ENCODE measurements at regions of chr4 and their contacts with region 1.

Region 1: DNA sequence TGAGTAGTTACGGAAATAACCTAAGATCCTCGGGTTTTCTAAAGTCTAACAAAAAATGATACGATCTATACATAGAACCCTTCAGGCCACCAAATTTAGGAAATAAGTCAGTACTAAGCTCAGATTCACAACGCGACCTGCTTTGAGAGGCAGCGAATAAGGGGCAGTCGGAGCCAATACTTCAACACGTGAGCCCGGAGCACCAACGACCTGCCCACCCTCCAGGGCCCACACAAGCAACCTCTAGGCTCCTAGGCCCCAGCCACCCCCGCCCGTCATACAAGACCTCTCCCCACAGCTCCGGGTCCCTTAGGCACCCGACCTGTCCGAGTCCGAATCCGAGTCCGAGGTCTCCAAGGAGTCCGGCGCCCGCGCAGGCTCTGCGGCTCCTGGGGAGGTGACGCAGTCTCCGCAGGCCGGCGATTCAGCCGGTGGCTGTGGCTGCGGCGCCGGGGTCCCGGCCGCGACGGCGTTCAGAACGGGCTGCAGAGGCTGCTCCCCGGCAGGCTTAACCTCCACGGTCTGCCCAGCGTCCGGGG is 580 bp downstream of the NAF1 start:
- DNase-seq: peak; percentile 23 to 78 (median 43)
- ATAC-seq: peak; percentile 61
- H3K4me3 ChIP-seq: peak overlapping the region; percentile 87
- H3K4me3 Mint-ChIP-seq: peak overlapping the region; percentile 87
- H3K27ac ChIP-seq: peak overlapping the region; percentile 86 to 96
- H3K27ac Mint-ChIP-seq: peak overlapping the region; percentile 100
- H3K4me1 ChIP-seq: peaks cover 17% of the 10 kb centered on the region
- H3K4me1 Mint-ChIP-seq: peaks cover 49% of the 10 kb centered on the region
- H3K27me3 ChIP-seq: no peaks in the 10 kb centered on the region
- H3K27me3 Mint-ChIP-seq: no peaks in the 10 kb centered on the region
- CTCF ChIP-seq: no peak

Region 2: DNA sequence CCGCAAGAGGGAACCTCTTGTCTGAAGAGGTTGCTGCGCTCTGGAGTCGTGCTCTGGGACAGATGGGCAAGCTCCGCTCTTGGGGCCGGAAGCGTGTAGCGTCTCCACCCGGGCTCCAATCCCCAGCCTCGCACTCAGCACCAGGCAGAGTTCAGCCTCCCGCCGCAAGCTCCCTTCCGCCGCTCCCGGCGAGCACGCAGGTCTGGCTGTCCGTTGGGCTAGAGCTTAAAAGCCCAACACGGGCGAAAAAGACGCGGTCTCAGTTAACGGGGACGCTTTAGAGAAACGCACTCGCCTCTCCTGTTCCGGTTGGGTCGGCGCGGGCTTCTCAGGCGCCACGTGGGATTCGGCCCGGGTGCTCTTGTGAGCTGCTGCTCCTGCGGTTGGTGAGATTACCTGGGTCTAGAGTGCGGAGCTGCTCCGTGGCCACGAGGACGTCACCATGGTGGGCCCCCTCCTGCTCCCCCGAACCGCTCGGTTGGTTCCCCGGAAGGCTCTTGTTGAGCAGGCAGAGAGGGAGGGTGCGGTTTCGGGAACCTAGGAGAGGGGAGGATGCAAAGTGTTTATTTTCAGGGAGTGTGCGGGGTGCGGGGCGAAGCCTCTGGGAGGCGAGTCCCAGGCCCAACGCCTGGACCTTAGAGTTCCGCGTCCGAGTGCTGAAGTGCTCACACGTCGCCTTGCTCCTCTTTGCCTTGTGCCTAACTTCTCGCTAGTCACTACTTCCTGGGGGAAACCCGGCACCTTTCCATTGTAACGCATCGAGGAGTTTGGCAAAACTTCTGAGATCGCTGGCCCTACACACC is 328.5 kb after region 1 on chr4 and contains the start of gene TMA16:
- CTCF ChIA-PET with region 1: no interaction called
- POLR2A ChIA-PET with region 1: interaction called, 11 read pairs
- intact Hi-C with region 1: loop called (anchors 5 kb)
- DNase-seq: peak; percentile 58 to 90 (median 71)
- ATAC-seq: peak; percentile 74
- H3K4me3 ChIP-seq: peak within 1 kb of the TSS; percentile 94
- H3K4me3 Mint-ChIP-seq: peak within 1 kb of the TSS; percentile 100
- H3K27ac ChIP-seq: peak within 1 kb of the TSS; percentile 70 to 71
- H3K27ac Mint-ChIP-seq: peak within 1 kb of the TSS; percentile 96
- H3K4me1 ChIP-seq: peaks cover 7% of the 10 kb centered on the region
- H3K4me1 Mint-ChIP-seq: peaks cover 36% of the 10 kb centered on the region
- H3K27me3 ChIP-seq: no peaks in the 10 kb centered on the region
- H3K27me3 Mint-ChIP-seq: no peaks in the 10 kb centered on the region
- CTCF ChIP-seq: no peak
- total RNA-seq, gene TMA16: 6.2 to 6.3 TPM

Region 3: DNA sequence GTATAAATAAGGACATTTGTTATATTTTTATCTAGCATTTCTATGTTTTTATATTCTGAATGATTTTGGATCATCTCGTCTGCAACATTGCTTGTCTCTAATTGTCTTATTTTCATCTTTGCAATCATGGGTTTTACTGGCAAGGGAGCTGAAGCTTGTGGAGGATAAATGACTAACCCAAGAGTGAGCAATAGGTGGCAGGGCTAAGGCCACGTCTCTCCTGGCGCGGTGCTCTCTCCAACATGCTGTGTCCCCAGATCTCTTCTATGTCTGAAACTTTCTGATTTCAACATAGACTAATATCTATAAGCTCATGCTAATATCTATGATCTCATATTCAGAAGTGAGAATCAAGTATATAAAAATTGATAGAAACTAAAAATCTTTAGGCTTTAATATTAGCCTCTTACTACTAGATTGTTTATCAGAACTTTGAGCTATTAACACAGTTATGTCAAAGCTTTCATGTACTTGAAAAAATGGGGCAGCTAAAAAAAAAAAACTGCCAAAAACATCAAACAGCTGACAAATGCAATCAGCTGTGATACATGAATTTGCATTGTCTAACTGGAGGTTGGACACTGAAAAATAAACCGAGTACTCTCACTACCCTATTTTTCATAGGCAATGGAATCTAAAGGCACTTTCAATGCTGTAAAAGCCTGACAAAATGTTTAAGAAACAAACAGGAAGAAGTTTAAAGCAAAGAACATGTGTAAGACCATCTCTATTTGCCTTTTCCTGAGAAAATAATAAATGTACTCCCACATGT is 497.5 kb after region 1 on chr4:
- CTCF ChIA-PET with region 1: no interaction called
- POLR2A ChIA-PET with region 1: no interaction called
- intact Hi-C with region 1: loop called in 1 of 2 experiments (anchors 10 kb)
- DNase-seq: peak in 2 of 14 experiments; percentile 29 to 37
- ATAC-seq: no peak
- H3K4me3 ChIP-seq: no peak overlapping the region
- H3K4me3 Mint-ChIP-seq: peak overlapping the region; percentile 12
- H3K27ac ChIP-seq: no peak overlapping the region
- H3K27ac Mint-ChIP-seq: peak overlapping the region; percentile 32
- H3K4me1 ChIP-seq: peaks cover 13% of the 10 kb centered on the region
- H3K4me1 Mint-ChIP-seq: peaks cover 62% of the 10 kb centered on the region
- H3K27me3 ChIP-seq: no peaks in the 10 kb centered on the region
- H3K27me3 Mint-ChIP-seq: no peaks in the 10 kb centered on the region
- CTCF ChIP-seq: no peak

Region 4: GRCh38 chr4:163694385-163694784 is 528.3 kb after region 1 on chr4:
- CTCF ChIA-PET with region 1: no interaction called
- POLR2A ChIA-PET with region 1: no interaction called
- intact Hi-C with region 1: no loop called
- DNase-seq: no peak
- ATAC-seq: no peak
- H3K4me3 ChIP-seq: no peak overlapping the region
- H3K4me3 Mint-ChIP-seq: no peak overlapping the region
- H3K27ac ChIP-seq: no peak overlapping the region
- H3K27ac Mint-ChIP-seq: no peak overlapping the region
- H3K4me1 ChIP-seq: no peaks in the 10 kb centered on the region
- H3K4me1 Mint-ChIP-seq: no peaks in the 10 kb centered on the region
- H3K27me3 ChIP-seq: no peaks in the 10 kb centered on the region
- H3K27me3 Mint-ChIP-seq: no peaks in the 10 kb centered on the region
- CTCF ChIP-seq: no peak

Region 5: GRCh38 chr4:165106518-165106917 is 1940.4 kb after region 1 on chr4:
- CTCF ChIA-PET with region 1: no interaction called
- POLR2A ChIA-PET with region 1: no interaction called
- intact Hi-C with region 1: loop called in 1 of 2 experiments (anchors 10 kb)
- DNase-seq: no peak
- ATAC-seq: no peak
- H3K4me3 ChIP-seq: no peak overlapping the region
- H3K4me3 Mint-ChIP-seq: no peak overlapping the region
- H3K27ac ChIP-seq: no peak overlapping the region
- H3K27ac Mint-ChIP-seq: no peak overlapping the region
- H3K4me1 ChIP-seq: no peaks in the 10 kb centered on the region
- H3K4me1 Mint-ChIP-seq: peaks cover 11% of the 10 kb centered on the region
- H3K27me3 ChIP-seq: no peaks in the 10 kb centered on the region
- H3K27me3 Mint-ChIP-seq: no peaks in the 10 kb centered on the region
- CTCF ChIP-seq: no peak

Measured in CD4-positive, alpha-beta T cell (primary cell).